Dorsolateral prefrontal cortex (tissue), 120 donors: ENCODE measurements at regions of chr3 and their contacts with region 1.

Region 1: DNA sequence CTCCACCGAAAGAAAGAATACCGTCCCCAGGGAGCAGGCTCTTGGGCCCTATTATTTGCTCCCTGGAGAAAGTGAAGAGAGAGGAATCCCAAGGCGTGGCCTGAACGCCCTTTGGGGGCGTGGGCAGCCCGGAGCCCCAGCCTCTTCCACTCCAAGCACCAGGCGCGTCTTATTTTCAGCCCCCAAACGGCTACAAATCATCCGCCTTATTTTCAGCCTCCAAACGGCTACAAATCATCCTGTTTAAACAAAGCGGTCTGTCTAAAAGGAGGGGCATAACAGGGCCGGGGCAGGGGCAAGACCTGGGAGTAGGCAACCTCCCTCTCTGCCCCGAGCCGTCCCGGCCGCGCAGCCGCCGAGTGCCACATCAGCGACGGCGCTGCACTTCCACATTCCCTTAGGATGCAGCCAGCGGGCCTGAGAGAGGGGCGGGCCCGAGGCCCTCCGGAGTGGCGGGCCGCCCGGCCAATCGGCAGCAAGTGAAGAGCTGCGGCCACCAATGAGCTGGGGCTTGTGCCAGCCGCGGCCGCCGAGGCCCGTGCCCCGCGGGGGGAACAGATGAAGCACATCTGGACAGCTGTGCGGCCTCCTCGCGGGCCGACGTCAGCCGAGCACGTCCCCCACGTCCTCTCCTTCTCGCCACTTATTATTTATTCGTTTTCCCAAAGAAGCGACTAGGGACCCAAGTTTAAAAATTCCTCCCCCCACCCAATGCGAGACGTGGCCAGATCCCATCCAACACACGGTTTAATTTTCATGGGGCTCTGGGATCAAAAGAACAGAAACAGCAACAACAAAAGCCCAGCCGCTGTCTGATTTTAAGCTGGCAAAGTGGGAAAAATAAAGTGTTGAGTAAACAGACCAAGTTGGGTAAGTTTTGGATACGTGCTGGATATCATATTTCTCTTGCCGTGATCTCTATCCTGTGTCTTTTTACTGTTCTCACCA is at the start of gene TMEM45A:
- DNase-seq: peak; percentile 83 to 98 (median 94)
- H3K4me3 ChIP-seq: peak within 1 kb of the TSS; percentile 44 to 85 (median 71)
- H3K27ac ChIP-seq: peak within 1 kb of the TSS in 50 of 59 donors; percentile 15 to 90 (median 62)
- H3K27me3 ChIP-seq: no peaks in the 10 kb centered on the region
- CTCF ChIP-seq: peak in 30 of 56 donors; percentile 9 to 61 (median 34)
- total RNA-seq, gene TMEM45A: 0.58 to 7.3 (median 2.3) TPM

Region 2: DNA sequence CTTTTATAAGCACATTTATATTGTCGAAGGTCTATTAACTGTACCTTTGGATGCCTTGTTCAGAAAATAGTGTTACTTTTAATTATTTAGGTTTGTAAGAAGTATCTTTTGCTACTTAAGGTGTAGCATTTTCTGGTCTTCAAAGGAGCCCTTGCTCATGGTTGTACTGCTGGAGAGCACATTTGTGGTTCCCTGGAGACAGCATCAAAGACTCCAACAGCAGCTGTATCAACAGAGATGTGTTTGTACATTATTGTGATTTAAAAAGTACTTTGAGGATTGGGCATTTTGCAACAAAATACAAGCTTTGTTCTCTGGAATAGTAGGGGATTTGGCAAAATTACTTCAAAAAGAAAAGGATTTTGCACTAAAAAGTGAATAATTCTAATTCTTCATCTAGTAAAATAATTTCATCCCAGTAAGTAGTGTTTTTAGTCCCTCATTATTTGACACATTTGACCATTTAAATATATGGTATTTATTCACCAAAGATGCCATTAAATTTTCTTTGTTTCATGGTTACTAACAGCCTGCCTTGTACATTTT is 215.0 kb before region 1 on chr3:
- intact Hi-C with region 1: no loop called
- DNase-seq: no peak
- H3K4me3 ChIP-seq: peak overlapping the region in 2 of 59 donors; percentile 5 to 10
- H3K27ac ChIP-seq: peak overlapping the region in 47 of 59 donors; percentile 1 to 77 (median 46)
- H3K27me3 ChIP-seq: no peaks in the 10 kb centered on the region
- CTCF ChIP-seq: no peak

Region 3: DNA sequence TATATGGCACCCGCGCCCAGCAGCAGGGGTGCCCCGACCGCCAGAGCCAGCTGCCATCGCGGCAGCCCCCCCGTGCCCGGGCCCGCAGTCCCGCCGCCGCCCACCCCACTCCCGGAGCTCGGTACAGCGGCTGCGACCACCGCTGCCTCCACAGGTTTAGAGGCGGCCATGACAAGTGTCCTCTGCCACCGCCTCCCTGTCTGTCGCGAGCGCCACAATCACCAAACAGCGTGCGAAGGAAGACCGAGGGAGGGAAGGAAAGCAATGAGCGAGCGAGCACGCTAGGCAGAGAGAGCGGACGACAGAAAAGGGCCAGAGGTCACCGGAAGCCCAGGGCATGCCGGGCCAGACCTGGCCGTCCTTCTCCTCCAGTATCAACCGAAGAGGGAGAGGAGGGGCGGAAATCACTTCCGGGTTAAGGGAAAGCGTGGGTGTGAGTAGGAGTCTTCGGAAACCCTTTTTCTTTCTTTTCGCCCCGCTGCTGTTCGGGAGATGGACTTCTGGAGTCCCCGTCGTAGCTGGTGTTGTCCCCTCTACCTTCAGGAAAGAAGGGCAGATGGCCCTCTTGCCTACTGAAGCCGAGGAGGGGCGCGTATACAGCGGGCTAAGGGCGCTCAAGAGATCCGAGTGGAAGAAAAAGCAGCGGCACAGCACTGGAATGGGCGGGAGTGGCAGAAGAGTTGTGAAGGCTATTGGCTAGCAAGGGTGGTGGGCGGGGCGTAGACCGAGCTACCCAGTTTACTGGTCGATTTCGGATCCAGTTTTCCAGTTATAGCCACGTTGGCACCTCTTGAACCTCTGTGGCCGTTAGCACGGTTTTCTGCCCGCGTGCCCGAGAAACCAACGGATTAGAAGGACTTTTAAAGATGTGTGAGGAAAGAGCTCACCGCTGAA is 91.3 kb before region 1 on chr3 and contains the starts of genes LNP1 and TOMM70:
- intact Hi-C with region 1: loop called (anchors 5 to 10 kb)
- DNase-seq: peak; percentile 94 to 99 (median 98)
- H3K4me3 ChIP-seq: peak within 1 kb of the TSS; percentile 78 to 100 (median 94)
- H3K27ac ChIP-seq: peak within 1 kb of the TSS; percentile 7 to 95 (median 87)
- H3K27me3 ChIP-seq: no peaks in the 10 kb centered on the region
- CTCF ChIP-seq: peak in 14 of 56 donors; percentile 0 to 49 (median 20)
- total RNA-seq, gene LNP1: 4.3 to 16.9 (median 9.5) TPM
- total RNA-seq, gene TOMM70: 24.6 to 81.5 (median 58.4) TPM

Region 4: DNA sequence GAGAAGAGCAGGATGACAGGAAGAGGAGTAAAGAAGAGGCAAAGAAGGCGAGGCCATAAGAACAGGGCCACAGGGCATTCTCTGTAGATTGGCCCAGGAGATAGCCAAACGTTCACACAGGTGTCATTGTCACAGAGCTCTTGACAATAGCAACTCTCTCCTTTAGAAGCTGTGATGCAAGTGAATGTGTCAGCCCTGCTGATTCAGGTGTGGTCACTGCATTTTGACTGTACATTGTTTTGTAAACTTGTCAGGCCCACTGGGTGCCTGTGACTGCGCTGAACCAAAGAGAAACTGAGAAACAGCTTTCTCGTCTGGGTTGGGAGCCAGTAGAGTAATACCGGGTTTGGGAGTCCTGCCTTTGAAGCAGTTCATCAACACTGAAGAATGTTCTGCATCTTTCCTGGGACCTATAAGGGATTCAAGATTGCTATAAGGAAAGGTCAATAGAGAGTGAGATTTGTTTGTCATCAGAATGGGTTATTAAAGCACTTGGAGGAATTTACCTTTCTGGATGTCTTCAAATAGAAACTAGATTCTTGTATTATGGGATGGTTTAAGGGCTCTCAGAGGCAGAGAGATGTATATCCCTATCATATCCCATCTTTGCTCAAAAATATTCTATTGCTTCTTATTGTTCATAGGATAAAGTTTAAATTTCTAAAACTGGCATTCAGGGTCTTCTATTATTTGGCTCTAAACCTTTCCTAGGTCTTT is 45.4 kb after region 1 on chr3:
- intact Hi-C with region 1: loop called in 1 of 2 experiments (anchors 5 kb)
- DNase-seq: no peak
- H3K4me3 ChIP-seq: no peak overlapping the region
- H3K27ac ChIP-seq: peak overlapping the region in 15 of 59 donors; percentile 1 to 64 (median 13)
- H3K27me3 ChIP-seq: no peaks in the 10 kb centered on the region
- CTCF ChIP-seq: no peak